Vagina (tissue), 2 donors: ENCODE measurements at regions of chr5 and their contacts with region 1.

Region 1: GRCh38 chr5:53095931-53096525 is 13.5 kb downstream of the MOCS2 start:
- DNase-seq: no peak
- H3K4me3 ChIP-seq: no peak overlapping the region
- H3K27ac ChIP-seq: no peak overlapping the region
- H3K4me1 ChIP-seq: peaks cover 3% of the 10 kb centered on the region
- H3K27me3 ChIP-seq: no peaks in the 10 kb centered on the region
- CTCF ChIP-seq: peak; percentile 59 to 86 (median 69)
- POLR2A ChIP-seq: no peak

Region 2: DNA sequence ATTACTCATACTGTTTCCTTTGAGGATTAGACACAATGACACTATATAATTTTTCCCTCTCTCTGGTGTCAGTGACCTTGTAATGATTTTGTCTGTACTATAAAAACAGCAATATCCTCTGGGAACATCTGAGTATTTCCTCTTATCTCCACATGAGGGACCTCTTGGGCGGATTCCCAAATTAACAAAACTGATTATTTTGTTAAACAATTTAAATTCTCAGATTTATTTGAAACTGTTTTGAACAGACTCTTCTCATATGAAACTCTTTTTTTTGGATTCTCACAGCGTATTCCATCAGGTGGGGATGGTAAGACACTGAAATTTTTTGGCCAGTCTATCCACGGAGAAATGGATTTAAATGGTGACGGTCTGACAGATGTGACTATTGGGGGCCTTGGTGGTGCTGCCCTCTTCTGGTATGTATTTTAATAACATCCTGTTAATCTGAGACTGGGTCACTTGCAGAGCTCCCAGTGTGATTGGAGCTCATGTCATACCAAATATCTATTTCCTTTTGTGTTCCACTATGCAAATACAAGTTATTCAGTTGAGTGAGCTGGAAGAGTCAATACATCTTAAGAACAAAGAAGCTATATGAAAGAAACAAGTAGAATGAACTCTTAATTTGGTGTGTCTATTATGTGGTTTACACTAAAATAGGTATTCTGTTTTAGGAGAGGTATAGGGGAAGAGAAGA is 180.7 kb before region 1 on chr5:
- intact Hi-C with region 1: no loop called
- DNase-seq: no peak
- H3K4me3 ChIP-seq: peak overlapping the region in 1 of 2 donors; percentile 17
- H3K27ac ChIP-seq: no peak overlapping the region
- H3K4me1 ChIP-seq: no peaks in the 10 kb centered on the region
- H3K27me3 ChIP-seq: no peaks in the 10 kb centered on the region
- CTCF ChIP-seq: peak; percentile 56 to 80 (median 67)
- POLR2A ChIP-seq: no peak

Region 3: DNA sequence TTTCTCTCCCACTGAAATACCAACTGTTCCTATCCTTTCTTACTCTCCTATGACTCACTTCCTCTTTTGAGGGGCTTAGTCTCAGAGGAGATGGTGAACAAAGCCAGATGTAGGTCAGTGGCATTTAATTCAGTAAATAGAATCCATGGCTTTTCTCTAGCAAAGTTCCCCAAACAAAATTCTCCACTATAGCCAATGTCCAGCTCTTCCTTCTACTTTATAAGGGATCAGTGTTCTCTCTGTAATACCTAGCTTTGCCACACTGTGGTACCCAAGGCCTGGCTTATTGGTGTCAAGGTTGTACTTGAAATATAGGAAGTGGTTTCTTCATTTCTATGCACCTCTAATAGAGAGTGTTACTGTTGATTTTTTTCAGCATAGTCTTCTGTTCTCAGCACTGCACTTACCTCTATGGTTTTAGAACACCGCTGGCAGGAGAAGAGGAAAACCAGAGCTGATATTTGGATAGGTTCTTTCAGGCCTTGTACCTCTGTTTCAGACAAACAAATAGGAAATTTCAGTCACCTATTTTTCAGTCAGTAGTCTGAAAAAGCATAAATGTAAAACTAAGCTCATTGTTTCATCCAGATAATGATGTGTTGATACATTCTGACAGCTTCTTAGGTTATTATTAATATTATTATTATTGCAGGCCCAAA is 147.5 kb before region 1 on chr5:
- intact Hi-C with region 1: loop called (anchors 10 kb)
- DNase-seq: no peak
- H3K4me3 ChIP-seq: no peak overlapping the region
- H3K27ac ChIP-seq: no peak overlapping the region
- H3K4me1 ChIP-seq: no peaks in the 10 kb centered on the region
- H3K27me3 ChIP-seq: no peaks in the 10 kb centered on the region
- CTCF ChIP-seq: peak; percentile 60 to 77 (median 61)
- POLR2A ChIP-seq: no peak